Naive thymus-derived CD4-positive, alpha-beta T cell (primary cell): ENCODE measurements at regions of chr6 and their contacts with region 1.

Region 1: DNA sequence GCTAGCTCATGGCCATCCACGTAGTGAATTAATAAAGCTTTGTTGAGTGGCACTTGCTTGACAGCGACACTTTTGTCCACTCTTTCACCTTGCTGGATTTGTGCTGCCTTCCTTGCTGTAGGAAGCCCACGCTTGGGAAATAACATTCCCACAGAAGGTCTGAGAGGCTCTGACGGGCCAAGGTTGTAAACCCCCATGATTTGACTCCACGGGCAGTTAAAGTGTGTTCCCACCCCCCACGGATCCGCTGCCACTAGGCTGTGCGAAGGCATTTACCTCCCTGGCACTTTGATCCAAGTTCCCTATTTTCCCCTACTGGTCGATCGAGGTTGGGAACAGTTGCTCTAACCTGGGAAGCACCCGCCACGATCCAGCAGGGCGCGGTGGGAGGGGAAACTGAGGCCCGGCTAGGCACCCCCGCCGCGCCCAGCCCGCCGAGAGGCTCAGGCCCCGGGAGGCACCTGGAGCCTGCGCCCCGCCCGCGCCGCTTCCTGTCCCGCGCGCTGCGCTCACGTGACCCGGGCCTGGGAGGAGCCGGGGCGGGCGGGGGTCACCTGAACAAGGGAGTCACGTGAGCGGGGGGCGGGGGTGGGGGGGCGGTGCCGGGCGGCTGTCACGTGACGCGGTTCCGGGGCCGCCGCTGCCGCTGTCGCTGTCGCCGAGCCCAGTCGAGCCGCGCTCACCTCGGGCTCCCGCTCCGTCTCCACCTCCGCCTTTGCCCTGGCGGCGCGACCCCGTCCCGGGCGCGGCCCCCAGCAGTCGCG is at the start of gene IGF2R:
- DNase-seq: peak; percentile 88 to 94 (median 92)
- ATAC-seq: peak; percentile 95
- H3K4me3 ChIP-seq: peak within 1 kb of the TSS; percentile 69
- H3K4me3 Mint-ChIP-seq: peak within 1 kb of the TSS; percentile 88 to 98 (median 92)
- H3K27ac ChIP-seq: peak within 1 kb of the TSS; percentile 82
- H3K27ac Mint-ChIP-seq: peak within 1 kb of the TSS; percentile 89 to 97 (median 94)
- H3K4me1 ChIP-seq: peaks cover 18 to 28% of the 10 kb centered on the region in 2 donors
- H3K4me1 Mint-ChIP-seq: peaks cover 27 to 43% (median 37%) of the 10 kb centered on the region in 7 donors
- H3K27me3 ChIP-seq: no peaks in the 10 kb centered on the region
- H3K27me3 Mint-ChIP-seq: peaks cover 0 to 30% (median 0%) of the 10 kb centered on the region in 5 donors
- total RNA-seq, gene IGF2R: 59.1 to 79.2 (median 74.2) TPM

Region 2: DNA sequence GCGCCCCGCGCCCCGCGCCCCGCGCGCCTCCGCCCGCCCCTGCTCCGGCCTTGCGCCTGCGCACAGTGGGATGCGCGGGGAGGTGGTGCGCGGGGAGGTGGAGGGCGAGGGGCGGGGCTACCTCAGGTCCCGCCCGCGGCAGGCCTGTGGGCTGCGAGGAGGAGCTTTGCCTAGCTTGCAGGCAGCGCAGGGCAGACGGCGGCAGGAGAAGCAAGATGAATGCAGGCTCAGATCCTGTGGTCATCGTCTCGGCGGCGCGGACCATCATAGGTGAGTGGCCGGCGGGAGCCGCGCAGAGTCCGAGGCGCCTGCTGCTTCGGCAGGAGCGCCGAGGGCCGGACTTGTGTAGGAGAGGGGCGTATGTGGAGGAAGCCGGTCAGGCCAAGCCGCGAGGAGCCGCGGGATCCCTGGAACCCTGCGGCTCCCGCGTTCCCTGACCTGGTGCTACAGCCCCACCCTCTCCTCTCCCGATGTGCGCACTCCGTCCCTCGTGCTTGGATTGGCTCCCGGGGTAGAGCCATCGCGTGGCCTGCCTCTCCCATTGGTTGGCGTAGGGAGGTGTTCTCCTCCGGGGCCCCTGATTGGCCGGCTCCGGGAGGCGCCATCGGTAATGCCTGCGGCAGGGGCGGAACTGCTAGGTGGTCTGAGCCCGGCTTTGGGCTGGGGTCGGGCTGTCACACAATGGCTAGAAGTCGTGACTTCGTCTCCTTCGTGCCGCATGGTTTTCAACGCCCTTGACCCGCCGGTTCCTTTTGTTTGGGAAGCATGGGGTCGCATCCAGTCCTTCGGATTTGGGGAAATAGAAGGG is 206.5 kb before region 1 on chr6 and contains the start of gene ACAT2:
- CTCF ChIA-PET with region 1: no interaction called
- POLR2A ChIA-PET with region 1: no interaction called
- intact Hi-C with region 1: loop called (anchors 1 kb)
- DNase-seq: peak; percentile 89 to 95 (median 93)
- ATAC-seq: peak; percentile 94
- H3K4me3 ChIP-seq: peak within 1 kb of the TSS; percentile 99
- H3K4me3 Mint-ChIP-seq: peak within 1 kb of the TSS; percentile 84 to 97 (median 94)
- H3K27ac ChIP-seq: peak within 1 kb of the TSS; percentile 98
- H3K27ac Mint-ChIP-seq: peak within 1 kb of the TSS; percentile 93 to 99 (median 97)
- H3K4me1 ChIP-seq: peaks cover 6 to 15% of the 10 kb centered on the region in 2 donors
- H3K4me1 Mint-ChIP-seq: peaks cover 23 to 49% (median 34%) of the 10 kb centered on the region in 7 donors
- H3K27me3 ChIP-seq: no peaks in the 10 kb centered on the region
- H3K27me3 Mint-ChIP-seq: no peaks in the 10 kb centered on the region
- total RNA-seq, gene ACAT2: 18.5 to 53.9 (median 28.0) TPM

Region 3: DNA sequence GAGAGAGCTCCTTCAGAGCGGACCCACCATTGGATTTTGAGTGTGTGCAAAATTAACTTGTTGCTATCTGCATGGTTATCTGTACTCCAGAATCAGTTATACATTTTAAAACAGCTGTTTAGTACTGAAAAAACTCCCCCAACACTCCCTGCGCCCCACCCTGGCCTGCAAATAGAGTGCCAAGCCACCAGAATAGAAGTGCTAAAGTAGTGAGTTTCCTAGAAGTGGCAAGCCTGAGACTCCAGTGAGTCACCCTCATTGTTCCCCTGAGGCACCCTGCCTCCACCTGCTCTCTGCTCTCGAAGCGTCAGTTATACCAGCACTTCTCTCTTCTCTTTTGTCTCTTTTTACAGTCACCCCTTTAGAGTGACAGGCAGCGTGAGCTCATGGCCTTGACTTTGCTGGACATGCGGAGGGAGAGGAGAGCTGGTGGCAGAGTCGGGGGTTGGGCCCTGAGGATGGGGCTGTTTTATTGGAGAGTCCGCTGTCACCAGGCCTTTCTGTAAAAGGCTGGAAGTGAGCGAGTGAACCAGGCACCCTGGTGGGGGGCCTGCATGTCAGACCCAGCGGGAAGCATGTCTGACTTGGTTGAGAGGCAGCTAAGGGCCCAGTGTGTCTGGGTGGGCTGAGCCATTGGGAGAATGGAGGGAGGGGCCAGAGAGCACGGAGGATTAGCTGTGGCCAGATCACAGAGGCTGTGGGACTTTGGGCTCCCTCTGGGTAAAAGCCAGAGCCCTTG is 10.7 kb after region 1 on chr6:
- CTCF ChIA-PET with region 1: no interaction called
- POLR2A ChIA-PET with region 1: interaction called, 60 read pairs
- intact Hi-C with region 1: loop called (anchors 1 kb)
- DNase-seq: peak in 1 of 9 donors; percentile 51
- ATAC-seq: peak; percentile 64
- H3K4me3 ChIP-seq: no peak overlapping the region
- H3K4me3 Mint-ChIP-seq: peak overlapping the region; percentile 8 to 82 (median 39)
- H3K27ac ChIP-seq: no peak overlapping the region
- H3K27ac Mint-ChIP-seq: peak overlapping the region; percentile 60 to 96 (median 86)
- H3K4me1 ChIP-seq: peaks cover 54 to 79% of the 10 kb centered on the region in 2 donors
- H3K4me1 Mint-ChIP-seq: peaks cover 78 to 99% (median 96%) of the 10 kb centered on the region in 7 donors
- H3K27me3 ChIP-seq: no peaks in the 10 kb centered on the region
- H3K27me3 Mint-ChIP-seq: no peaks in the 10 kb centered on the region

Region 4: GRCh38 chr6:160462551-160463109 is 494.0 kb after region 1 on chr6:
- CTCF ChIA-PET with region 1: no interaction called
- POLR2A ChIA-PET with region 1: no interaction called
- intact Hi-C with region 1: loop called (anchors 5 to 10 kb)
- DNase-seq: peak in 8 of 9 donors; percentile 69 to 93 (median 90)
- ATAC-seq: peak; percentile 95
- H3K4me3 ChIP-seq: peak overlapping the region; percentile 47
- H3K4me3 Mint-ChIP-seq: peak overlapping the region; percentile 60 to 89 (median 72)
- H3K27ac ChIP-seq: no peak overlapping the region
- H3K27ac Mint-ChIP-seq: peak overlapping the region; percentile 53 to 98 (median 88)
- H3K4me1 ChIP-seq: peaks cover 50 to 56% of the 10 kb centered on the region in 2 donors
- H3K4me1 Mint-ChIP-seq: peaks cover 33 to 81% (median 71%) of the 10 kb centered on the region in 7 donors
- H3K27me3 ChIP-seq: no peaks in the 10 kb centered on the region
- H3K27me3 Mint-ChIP-seq: peaks cover 0 to 52% (median 10%) of the 10 kb centered on the region in 5 donors